ENCODE measurements at regions of chrX and their contacts with region 1.

Region 1: GRCh38 chrX:123960042-123960611 is 1.4 kb upstream of the STAG2 start:
- DNase-seq: peak; percentile 75 to 91 (median 87)
- ATAC-seq: peak; percentile 82
- H3K4me3 ChIP-seq: peak overlapping the region; percentile 87
- H3K4me3 Mint-ChIP-seq: peak overlapping the region; percentile 88 to 99 (median 97)
- H3K27ac ChIP-seq: peak overlapping the region; percentile 99
- H3K27ac Mint-ChIP-seq: peak overlapping the region; percentile 97 to 100 (median 98)
- H3K4me1 ChIP-seq: peaks cover under 1 to 2% of the 10 kb centered on the region in 2 donors
- H3K4me1 Mint-ChIP-seq: peaks cover 6 to 28% (median 17%) of the 10 kb centered on the region in 7 donors
- H3K27me3 ChIP-seq: no peaks in the 10 kb centered on the region
- H3K27me3 Mint-ChIP-seq: peaks cover 0 to 4% (median 0%) of the 10 kb centered on the region in 5 donors

Region 2: DNA sequence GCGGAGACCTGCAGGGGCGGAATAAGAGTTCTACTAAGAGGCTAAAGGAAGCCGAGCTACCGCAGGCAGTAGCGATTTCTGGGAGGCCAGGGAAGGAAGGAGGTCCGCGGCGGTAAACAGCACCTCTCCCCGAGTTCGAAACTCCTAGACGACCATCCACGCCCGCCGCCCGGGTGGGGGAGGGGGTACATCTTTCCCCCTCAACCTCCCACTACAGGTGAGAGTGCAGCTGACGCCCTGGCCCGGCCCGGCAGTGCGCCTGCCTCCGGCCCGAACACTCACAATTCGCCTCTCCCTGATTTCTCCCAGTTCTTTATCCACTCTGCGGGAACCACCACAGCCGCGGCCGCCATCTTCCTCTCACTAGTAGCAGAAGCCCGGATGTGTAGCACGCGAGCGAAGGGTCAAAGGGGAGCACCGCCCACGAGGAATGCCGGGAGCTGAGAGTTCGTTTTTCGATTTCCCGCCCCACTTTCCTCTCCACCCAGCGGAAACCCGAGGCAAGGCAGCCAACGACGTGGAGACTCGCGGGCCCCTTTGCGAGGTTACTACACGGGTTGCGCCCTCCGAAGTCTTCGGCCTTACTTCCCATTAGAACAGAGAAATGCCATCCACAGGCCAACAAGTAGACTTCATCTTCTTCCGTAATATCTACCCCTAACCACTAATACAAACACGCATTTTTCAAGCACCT is 227.3 kb before region 1 on chrX and contains the start of gene THOC2:
- CTCF ChIA-PET with region 1: no interaction called
- POLR2A ChIA-PET with region 1: no interaction called
- intact Hi-C with region 1: loop called in 1 of 2 experiments (anchors 2 kb)
- DNase-seq: peak; percentile 47 to 77 (median 69)
- ATAC-seq: peak; percentile 97
- H3K4me3 ChIP-seq: peak within 1 kb of the TSS; percentile 82
- H3K4me3 Mint-ChIP-seq: peak within 1 kb of the TSS; percentile 84 to 98 (median 94)
- H3K27ac ChIP-seq: peak within 1 kb of the TSS; percentile 83
- H3K27ac Mint-ChIP-seq: peak within 1 kb of the TSS; percentile 84 to 95 (median 93)
- H3K4me1 ChIP-seq: peaks cover 0 to 9% of the 10 kb centered on the region in 2 donors
- H3K4me1 Mint-ChIP-seq: peaks cover 14 to 49% (median 40%) of the 10 kb centered on the region in 7 donors
- H3K27me3 ChIP-seq: no peaks in the 10 kb centered on the region
- H3K27me3 Mint-ChIP-seq: no peaks in the 10 kb centered on the region
- total RNA-seq, gene THOC2: 78.7 to 124 (median 92.4) TPM

Region 3: GRCh38 chrX:123878252-123878721 is 81.8 kb before region 1 on chrX:
- CTCF ChIA-PET with region 1: no interaction called
- POLR2A ChIA-PET with region 1: no interaction called
- intact Hi-C with region 1: loop called in 1 of 2 experiments (anchors 5 kb)
- DNase-seq: peak in 2 of 9 donors; percentile 18 to 22
- ATAC-seq: peak; percentile 58
- H3K4me3 ChIP-seq: no peak overlapping the region
- H3K4me3 Mint-ChIP-seq: peak overlapping the region in 9 of 10 donors; percentile 12 to 78 (median 57)
- H3K27ac ChIP-seq: peak overlapping the region; percentile 44
- H3K27ac Mint-ChIP-seq: peak overlapping the region; percentile 29 to 84 (median 68)
- H3K4me1 ChIP-seq: peaks cover 7 to 9% of the 10 kb centered on the region in 2 donors
- H3K4me1 Mint-ChIP-seq: peaks cover 6 to 37% (median 23%) of the 10 kb centered on the region in 7 donors
- H3K27me3 ChIP-seq: no peaks in the 10 kb centered on the region
- H3K27me3 Mint-ChIP-seq: no peaks in the 10 kb centered on the region

Region 4: GRCh38 chrX:124086411-124086810 is 126.3 kb after region 1 on chrX:
- CTCF ChIA-PET with region 1: no interaction called
- POLR2A ChIA-PET with region 1: interaction called, 4 read pairs
- intact Hi-C with region 1: loop called (anchors 1 to 5 kb)
- DNase-seq: peak in 8 of 9 donors; percentile 21 to 78 (median 64)
- ATAC-seq: peak; percentile 97
- H3K4me3 ChIP-seq: no peak overlapping the region
- H3K4me3 Mint-ChIP-seq: peak overlapping the region in 9 of 10 donors; percentile 4 to 84 (median 68)
- H3K27ac ChIP-seq: peak overlapping the region; percentile 59
- H3K27ac Mint-ChIP-seq: peak overlapping the region; percentile 85 to 94 (median 91)
- H3K4me1 ChIP-seq: peaks cover 0 to 6% of the 10 kb centered on the region in 2 donors
- H3K4me1 Mint-ChIP-seq: peaks cover 7 to 41% (median 31%) of the 10 kb centered on the region in 7 donors
- H3K27me3 ChIP-seq: no peaks in the 10 kb centered on the region
- H3K27me3 Mint-ChIP-seq: no peaks in the 10 kb centered on the region

Region 5: DNA sequence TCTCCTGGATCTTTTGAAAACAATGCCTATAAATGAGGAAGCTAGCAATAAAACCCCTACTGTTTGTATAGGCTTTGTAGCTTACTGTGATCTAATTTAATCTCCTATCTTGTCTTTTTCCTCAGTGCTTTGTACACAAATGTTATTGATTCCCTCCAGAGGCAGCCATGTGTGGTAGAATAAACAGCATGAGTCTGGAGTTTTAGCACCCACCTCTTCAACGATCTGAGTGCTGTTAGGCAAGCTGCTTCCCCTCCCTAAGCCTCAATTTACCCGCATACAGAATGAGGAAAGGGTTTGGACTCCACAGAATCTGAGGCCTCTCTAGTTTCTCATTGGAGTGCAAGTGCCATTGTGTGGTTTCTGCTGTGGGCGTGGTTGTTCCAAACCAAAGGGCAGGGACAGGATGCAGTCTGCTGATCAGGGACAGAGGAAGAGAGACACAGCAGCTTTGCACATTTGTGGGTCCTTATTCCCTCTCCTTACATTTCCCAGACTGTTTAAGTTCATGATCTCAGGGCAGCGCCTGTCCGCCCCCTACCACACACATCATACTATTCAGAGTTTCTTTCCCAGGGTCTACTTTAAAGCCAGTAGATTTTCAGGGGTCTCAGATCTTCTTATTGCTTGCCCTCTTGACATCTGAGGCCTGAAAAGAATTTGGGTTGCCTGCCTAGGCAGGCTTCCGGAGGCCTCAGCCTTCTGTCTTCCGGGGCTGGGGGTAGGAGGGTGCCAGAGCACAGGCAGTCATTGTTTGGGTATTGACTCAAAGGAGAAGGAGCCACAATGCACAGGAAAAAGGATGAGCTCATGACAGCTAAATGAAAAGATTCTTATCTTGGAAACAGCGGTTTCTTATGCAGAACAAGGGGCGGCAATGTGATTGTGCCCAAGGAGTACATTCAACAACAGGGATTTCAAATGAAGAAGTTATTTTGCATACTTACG is 257.5 kb after region 1 on chrX:
- CTCF ChIA-PET with region 1: no interaction called
- POLR2A ChIA-PET with region 1: interaction called, 3 read pairs
- intact Hi-C with region 1: loop called (anchors 1 to 2 kb)
- DNase-seq: peak; percentile 11 to 84 (median 78)
- ATAC-seq: peak; percentile 97
- H3K4me3 ChIP-seq: peak overlapping the region; percentile 46
- H3K4me3 Mint-ChIP-seq: peak overlapping the region; percentile 56 to 82 (median 76)
- H3K27ac ChIP-seq: peak overlapping the region; percentile 72
- H3K27ac Mint-ChIP-seq: peak overlapping the region; percentile 76 to 98 (median 93)
- H3K4me1 ChIP-seq: peaks cover 52 to 62% of the 10 kb centered on the region in 2 donors
- H3K4me1 Mint-ChIP-seq: peaks cover 40 to 95% (median 84%) of the 10 kb centered on the region in 7 donors
- H3K27me3 ChIP-seq: no peaks in the 10 kb centered on the region
- H3K27me3 Mint-ChIP-seq: no peaks in the 10 kb centered on the region

Region 6: DNA sequence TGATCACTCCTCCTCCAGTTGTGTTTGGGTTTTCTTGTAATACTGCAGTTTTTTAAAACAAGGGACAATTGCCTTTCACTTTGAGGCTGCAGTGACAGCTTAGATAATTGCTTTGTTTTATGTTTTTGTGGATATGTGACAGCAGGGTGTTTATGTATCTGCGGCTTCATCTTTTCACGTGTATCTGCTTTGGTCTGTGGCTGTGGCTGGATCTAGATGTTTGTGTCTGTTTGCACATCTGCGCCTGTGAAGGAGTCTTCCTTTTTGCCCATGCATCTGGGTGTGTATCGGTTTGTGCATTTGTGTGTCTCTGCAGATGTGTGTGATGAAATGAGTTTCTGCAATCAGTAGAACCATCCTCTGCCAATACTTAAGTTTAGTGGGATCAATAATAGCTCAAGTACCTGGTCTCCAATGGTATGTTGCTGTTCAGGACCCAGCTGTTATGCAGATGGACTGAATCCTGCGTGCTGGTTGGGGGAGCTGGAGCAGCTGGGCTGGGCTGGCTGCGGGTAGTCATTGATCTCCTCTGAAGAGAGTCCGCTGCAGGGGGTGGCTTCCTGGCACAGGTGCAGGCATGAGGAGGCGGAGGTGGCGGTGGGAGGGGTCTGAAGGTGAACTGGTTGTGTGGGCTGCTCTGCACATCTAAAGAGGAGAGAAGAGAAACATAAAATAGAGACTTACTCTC is 776.6 kb after region 1 on chrX:
- CTCF ChIA-PET with region 1: no interaction called
- POLR2A ChIA-PET with region 1: no interaction called
- intact Hi-C with region 1: loop called in 1 of 2 experiments (anchors 5 kb)
- DNase-seq: peak; percentile 15 to 78 (median 65)
- ATAC-seq: peak; percentile 88
- H3K4me3 ChIP-seq: peak overlapping the region; percentile 41
- H3K4me3 Mint-ChIP-seq: peak overlapping the region; percentile 70 to 83 (median 79)
- H3K27ac ChIP-seq: peak overlapping the region; percentile 39
- H3K27ac Mint-ChIP-seq: peak overlapping the region; percentile 81 to 93 (median 86)
- H3K4me1 ChIP-seq: peaks cover 10 to 17% of the 10 kb centered on the region in 2 donors
- H3K4me1 Mint-ChIP-seq: peaks cover 10 to 57% (median 45%) of the 10 kb centered on the region in 7 donors
- H3K27me3 ChIP-seq: no peaks in the 10 kb centered on the region
- H3K27me3 Mint-ChIP-seq: no peaks in the 10 kb centered on the region